IMR-90 (cell line): ENCODE measurements at regions of chr16 and their contacts with region 1.

Region 1: GRCh38 chr16:49755313-49755620 is 100.6 kb downstream of the ZNF423 start:
- DNase-seq: peak; percentile 12
- ATAC-seq: peak; percentile 44; the same call in 1 of the 2 replicates
- H3K4me3 ChIP-seq: no peak overlapping the region
- H3K27ac ChIP-seq: no peak overlapping the region
- H3K4me1 ChIP-seq: no peaks in the 10 kb centered on the region
- H3K27me3 ChIP-seq: peaks cover 12% of the 10 kb centered on the region; the same call in 1 of the 2 replicates
- CTCF ChIP-seq: peak; percentile 39
- POLR2A ChIP-seq: no peak
- RAD21 ChIP-seq: peak; percentile 40

Region 2: DNA sequence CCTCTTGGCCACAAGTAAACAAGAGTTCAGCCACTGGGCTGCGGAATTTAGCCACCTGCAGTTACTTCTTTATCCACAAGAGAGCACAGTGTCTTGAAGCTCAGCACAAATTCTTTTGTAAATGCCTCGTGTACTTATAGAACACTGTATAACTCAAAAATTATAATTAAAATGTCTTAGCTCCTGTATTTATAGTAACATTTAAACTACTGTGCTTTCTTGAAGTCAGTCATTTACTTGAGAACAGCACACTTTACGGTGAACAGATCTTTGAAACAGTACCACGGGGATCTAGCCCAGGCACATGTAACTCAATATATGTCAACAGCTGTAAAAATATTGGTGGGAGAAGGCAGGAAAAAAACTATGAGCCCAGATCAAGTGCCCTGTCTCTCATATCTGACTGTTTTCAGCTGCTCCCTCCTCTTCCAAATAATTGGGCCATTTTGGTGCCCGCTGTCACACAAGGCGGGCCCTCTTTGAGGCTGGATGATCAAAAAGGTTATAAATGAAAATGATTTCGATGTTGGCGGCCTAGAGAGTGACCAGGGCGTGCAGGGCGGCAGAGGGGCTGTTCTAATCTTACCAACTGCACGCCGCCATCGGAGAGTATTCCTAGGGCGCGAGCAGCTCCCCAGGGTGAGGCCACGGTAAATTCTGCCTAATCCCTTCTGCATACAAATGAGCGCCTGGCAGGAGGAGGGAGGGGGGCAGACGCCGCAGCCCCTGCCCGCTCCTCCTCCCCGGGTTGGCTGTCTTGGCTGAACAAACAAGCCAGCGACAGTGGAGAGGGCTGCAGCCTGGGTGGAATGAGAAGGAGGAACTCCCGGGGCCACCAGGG is 198.4 kb before region 1 on chr16:
- CTCF ChIA-PET with region 1: no interaction called
- POLR2A ChIA-PET with region 1: no interaction called
- dilution Hi-C with region 1: no loop called
- in situ Hi-C with region 1: no loop called
- intact Hi-C with region 1: loop called (anchors 1 kb)
- DNase-seq: peak; percentile 35
- ATAC-seq: peak; percentile 72
- H3K4me3 ChIP-seq: no peak overlapping the region
- H3K27ac ChIP-seq: no peak overlapping the region
- H3K4me1 ChIP-seq: no peaks in the 10 kb centered on the region
- H3K27me3 ChIP-seq: peaks cover 2% of the 10 kb centered on the region; the same call in 1 of the 2 replicates
- CTCF ChIP-seq: peak; percentile 34
- POLR2A ChIP-seq: no peak
- RAD21 ChIP-seq: peak; percentile 41

Region 3: DNA sequence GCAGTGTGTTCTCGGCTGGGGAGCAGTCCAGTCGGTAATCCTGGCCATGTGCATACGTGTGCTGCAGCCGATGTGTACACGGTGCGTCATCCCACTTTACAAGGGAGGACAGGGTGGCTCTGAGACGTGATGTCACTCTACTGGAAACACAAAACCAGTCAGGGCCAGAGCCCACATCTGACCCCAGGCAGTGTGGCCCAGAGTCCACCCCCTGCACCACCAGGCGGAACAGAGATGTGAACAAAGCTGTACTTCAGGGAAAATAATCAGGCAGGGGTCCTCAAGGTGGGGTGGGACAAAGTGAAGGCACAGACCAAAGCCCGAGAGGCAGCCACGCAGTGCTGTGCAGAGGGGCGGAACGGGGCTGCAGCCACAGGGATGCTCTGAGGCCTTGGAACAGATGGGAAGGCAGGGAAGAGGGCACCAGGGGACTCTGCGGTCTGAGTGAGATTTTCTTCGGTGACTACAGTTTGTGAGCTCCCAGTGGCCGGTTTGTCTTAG is 80.9 kb before region 1 on chr16:
- CTCF ChIA-PET with region 1: no interaction called
- POLR2A ChIA-PET with region 1: no interaction called
- dilution Hi-C with region 1: no loop called
- in situ Hi-C with region 1: no loop called
- intact Hi-C with region 1: no loop called
- DNase-seq: no peak
- ATAC-seq: no peak
- H3K4me3 ChIP-seq: no peak overlapping the region
- H3K27ac ChIP-seq: no peak overlapping the region
- H3K4me1 ChIP-seq: no peaks in the 10 kb centered on the region
- H3K27me3 ChIP-seq: peaks cover 1% of the 10 kb centered on the region; the same call in 1 of the 2 replicates
- CTCF ChIP-seq: no peak
- POLR2A ChIP-seq: no peak
- RAD21 ChIP-seq: no peak